ENCODE measurements at regions of chr11 and their contacts with region 1.

Region 1: DNA sequence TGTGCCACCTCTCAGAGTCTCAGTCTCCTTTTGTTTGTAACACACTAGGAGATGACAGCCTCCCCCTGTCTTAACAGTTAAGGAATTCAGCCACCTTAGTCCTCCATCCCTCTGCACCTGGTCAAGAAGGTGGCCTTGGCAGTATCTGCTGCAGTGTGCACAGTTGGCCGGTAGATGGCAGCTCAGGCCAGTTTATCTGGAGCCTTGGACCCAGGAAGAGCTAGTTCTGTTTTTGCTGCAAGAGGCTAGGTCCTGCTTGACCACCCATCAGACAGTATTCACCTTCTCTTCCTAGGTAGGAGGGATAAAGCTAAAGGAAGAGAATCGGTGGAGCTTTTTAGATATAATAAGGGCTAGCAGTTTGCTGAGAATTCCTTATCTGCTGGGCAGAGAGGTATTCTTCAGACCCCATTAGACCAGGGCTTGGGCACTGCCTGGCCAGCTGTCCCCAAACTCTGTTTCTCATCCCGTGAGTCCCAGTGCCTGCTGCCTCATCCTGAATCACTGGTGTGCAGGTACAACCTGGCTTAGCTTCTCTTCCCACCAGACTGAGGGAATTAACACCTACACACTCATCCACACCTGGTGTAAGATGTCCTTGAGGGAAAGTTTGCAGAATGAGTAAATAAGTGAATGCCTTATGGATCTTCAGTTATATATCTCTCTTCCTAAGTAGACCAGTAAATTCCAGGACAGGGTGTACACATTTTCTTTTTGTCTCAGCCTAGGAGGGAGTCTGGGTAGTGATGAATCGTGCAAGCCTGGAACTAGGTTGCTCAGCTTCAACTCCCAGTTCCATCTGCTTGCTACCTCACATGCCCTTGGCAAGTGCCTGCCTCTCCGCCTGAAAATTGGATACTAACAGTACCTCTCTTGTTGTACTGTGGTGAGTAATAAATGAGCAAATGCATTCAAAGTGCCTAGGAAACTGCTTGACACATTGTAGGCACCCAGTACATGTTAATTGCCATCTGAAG is 70.8 kb upstream of the NARS2 start:
- DNase-seq: peak; percentile 38 to 69
- H3K4me3 ChIP-seq: no peak overlapping the region
- H3K27ac ChIP-seq: no peak overlapping the region
- H3K4me1 ChIP-seq: no peaks in the 10 kb centered on the region
- H3K27me3 ChIP-seq: no peaks in the 10 kb centered on the region
- CTCF ChIP-seq: peak; percentile 50 to 95 (median 91)
- POLR2A ChIP-seq: no peak

Region 2: DNA sequence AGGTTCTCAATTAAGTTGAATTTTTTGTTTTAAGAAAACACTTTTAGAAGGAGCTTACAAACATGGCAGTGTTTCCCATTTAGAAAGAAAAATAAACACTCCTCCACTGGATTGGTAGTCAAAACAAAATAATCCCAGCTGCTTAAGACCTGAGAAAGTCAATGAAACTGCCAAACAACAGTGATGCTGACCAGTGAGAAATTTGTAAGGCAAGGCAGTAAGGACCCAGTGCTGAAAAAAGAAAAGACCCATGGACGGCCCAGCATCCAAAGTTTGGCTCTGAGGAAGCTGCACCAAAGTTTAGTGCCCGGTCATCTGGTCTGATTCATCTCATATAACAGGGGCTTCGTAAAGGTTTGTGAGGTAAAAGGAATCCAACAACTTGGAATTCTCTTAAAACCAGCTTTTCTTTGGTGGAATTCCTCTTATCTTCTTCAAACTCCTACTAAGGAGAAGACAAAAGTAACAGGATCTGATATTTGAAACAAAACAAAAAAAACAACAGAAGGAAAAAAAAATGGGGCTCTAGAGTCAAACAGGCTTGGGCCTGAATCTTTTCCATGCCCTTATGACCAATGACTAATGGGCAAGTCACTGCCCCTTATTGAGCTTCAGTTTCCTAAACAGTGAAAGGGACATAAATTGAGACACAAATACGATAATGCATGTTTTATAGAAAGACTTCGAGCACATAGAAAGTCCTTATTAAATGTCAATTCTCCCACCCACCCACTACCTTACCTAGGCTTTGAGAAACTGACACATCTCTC is 312.1 kb after region 1 on chr11:
- intact Hi-C with region 1: loop called (anchors 10 kb)
- DNase-seq: no peak
- H3K4me3 ChIP-seq: no peak overlapping the region
- H3K27ac ChIP-seq: no peak overlapping the region
- H3K4me1 ChIP-seq: no peaks in the 10 kb centered on the region
- H3K27me3 ChIP-seq: no peaks in the 10 kb centered on the region
- CTCF ChIP-seq: no peak
- POLR2A ChIP-seq: no peak

Region 3: GRCh38 chr11:79076526-79077115 is 431.1 kb after region 1 on chr11:
- intact Hi-C with region 1: no loop called
- DNase-seq: no peak
- H3K4me3 ChIP-seq: no peak overlapping the region
- H3K27ac ChIP-seq: no peak overlapping the region
- H3K4me1 ChIP-seq: no peaks in the 10 kb centered on the region
- H3K27me3 ChIP-seq: no peaks in the 10 kb centered on the region
- CTCF ChIP-seq: peak in 2 of 3 donors; percentile 23 to 50
- POLR2A ChIP-seq: no peak